MCF 10A (cell line): ENCODE measurements at regions of chr3 and their contacts with region 1.

Region 1: DNA sequence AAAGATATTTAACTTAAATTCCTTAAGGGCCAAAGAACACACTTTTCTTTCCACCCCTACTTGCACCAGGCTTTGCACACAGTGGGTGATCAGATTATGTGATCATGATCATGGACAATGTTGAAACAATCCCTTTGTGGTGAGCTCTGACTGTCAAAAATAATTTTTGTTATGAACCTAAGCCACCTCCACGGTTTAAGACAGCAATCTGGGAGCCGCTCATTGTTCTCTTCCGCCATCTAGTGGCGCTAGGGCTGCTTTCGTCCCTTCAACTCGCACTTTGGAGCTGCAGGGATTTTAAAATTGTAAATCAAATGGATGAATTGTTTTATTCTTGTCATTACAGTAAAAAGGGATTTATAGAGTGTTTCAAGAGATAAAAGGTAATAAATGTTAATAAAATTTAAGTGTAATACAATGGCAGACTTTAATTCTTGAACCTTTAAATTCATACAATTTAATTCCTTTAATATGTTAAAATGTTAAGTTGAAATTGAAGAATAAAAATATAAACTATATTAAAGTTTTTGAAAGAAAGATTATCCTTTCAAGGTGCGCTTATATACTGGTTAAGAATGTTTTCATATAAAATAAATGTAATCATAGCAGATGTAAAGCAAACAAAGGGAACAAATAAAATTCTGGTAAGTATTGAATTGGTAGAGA is 45.3 kb upstream of the ARL6 start:
- DNase-seq: peak; percentile 83
- H3K4me3 Mint-ChIP-seq: peak overlapping the region; percentile 28
- H3K27ac Mint-ChIP-seq: no peak overlapping the region
- H3K4me1 Mint-ChIP-seq: no peaks in the 10 kb centered on the region
- H3K27me3 Mint-ChIP-seq: peaks cover 10% of the 10 kb centered on the region
- CTCF ChIP-seq: peak; percentile 84

Region 2: GRCh38 chr3:97658668-97659285 is 60.5 kb before region 1 on chr3:
- CTCF ChIA-PET with region 1: interaction called, 6 read pairs
- POLR2A ChIA-PET with region 1: no interaction called
- intact Hi-C with region 1: loop called (anchors 1 kb)
- DNase-seq: peak; percentile 48
- H3K4me3 Mint-ChIP-seq: no peak overlapping the region
- H3K27ac Mint-ChIP-seq: no peak overlapping the region
- H3K4me1 Mint-ChIP-seq: no peaks in the 10 kb centered on the region
- H3K27me3 Mint-ChIP-seq: peaks cover 62% of the 10 kb centered on the region
- CTCF ChIP-seq: peak; percentile 70

Region 3: GRCh38 chr3:97670952-97671351 is 48.3 kb before region 1 on chr3:
- CTCF ChIA-PET with region 1: interaction called, 10 read pairs
- POLR2A ChIA-PET with region 1: no interaction called
- intact Hi-C with region 1: no loop called
- DNase-seq: no peak
- H3K4me3 Mint-ChIP-seq: no peak overlapping the region
- H3K27ac Mint-ChIP-seq: no peak overlapping the region
- H3K4me1 Mint-ChIP-seq: no peaks in the 10 kb centered on the region
- H3K27me3 Mint-ChIP-seq: peaks cover 35% of the 10 kb centered on the region
- CTCF ChIP-seq: no peak

Region 4: DNA sequence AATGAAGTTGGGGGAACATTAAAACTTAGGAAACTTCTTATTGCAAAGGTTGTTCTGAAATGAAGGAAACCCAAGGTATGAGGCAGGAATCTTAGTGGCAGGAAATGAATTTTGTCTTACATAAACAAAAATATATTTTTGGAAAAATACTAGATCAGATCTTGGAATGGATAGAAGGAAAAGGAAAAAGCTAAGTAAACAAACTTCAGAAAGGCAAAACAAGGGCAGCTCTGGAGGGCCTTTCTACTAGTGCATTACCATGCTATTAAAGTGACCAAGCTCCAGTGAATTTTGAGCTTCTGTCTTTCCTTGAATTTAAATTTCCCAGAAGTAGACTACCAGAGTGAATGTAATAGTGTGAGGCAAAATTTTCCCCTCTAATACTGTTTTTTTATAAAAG is 58.9 kb after region 1 on chr3:
- CTCF ChIA-PET with region 1: no interaction called
- POLR2A ChIA-PET with region 1: no interaction called
- intact Hi-C with region 1: no loop called
- DNase-seq: no peak
- H3K4me3 Mint-ChIP-seq: no peak overlapping the region
- H3K27ac Mint-ChIP-seq: no peak overlapping the region
- H3K4me1 Mint-ChIP-seq: no peaks in the 10 kb centered on the region
- H3K27me3 Mint-ChIP-seq: no peaks in the 10 kb centered on the region
- CTCF ChIP-seq: no peak

Region 5: DNA sequence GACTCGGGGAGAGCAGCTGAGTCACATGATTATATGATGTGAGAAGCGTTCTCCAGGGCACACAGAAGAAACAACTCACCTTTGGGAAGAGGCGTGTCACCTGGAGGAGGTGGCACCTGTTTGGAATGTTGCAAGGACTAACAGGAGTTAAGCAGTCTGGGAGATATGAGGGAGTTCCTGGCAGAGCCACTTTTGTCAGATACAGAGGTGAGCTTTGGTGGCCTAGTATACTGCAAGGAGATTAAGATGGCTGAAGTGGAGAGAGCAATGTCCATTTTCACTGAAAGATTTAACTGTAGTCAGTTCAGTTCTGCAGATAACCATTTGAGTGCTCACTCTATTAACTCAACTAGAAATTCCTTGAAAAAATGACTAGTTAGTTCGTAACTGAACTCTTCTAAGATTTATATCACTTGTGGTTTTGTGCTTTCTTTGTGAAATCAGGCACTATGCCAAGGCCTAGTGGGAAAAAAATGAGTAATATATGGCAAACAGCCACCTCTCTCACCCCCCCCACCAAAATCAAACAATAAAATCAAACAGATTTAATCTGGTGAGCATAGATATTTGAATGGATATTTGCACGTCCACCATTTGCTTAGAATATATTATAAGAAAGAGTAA is 163.8 kb after region 1 on chr3:
- CTCF ChIA-PET with region 1: no interaction called
- POLR2A ChIA-PET with region 1: no interaction called
- intact Hi-C with region 1: no loop called
- DNase-seq: peak; percentile 80
- H3K4me3 Mint-ChIP-seq: peak overlapping the region; percentile 5
- H3K27ac Mint-ChIP-seq: peak overlapping the region; percentile 5
- H3K4me1 Mint-ChIP-seq: peaks cover 20% of the 10 kb centered on the region
- H3K27me3 Mint-ChIP-seq: no peaks in the 10 kb centered on the region
- CTCF ChIP-seq: no peak